WTC11 (cell line): ENCODE measurements at regions of chr4 and their contacts with region 1.

Region 1: DNA sequence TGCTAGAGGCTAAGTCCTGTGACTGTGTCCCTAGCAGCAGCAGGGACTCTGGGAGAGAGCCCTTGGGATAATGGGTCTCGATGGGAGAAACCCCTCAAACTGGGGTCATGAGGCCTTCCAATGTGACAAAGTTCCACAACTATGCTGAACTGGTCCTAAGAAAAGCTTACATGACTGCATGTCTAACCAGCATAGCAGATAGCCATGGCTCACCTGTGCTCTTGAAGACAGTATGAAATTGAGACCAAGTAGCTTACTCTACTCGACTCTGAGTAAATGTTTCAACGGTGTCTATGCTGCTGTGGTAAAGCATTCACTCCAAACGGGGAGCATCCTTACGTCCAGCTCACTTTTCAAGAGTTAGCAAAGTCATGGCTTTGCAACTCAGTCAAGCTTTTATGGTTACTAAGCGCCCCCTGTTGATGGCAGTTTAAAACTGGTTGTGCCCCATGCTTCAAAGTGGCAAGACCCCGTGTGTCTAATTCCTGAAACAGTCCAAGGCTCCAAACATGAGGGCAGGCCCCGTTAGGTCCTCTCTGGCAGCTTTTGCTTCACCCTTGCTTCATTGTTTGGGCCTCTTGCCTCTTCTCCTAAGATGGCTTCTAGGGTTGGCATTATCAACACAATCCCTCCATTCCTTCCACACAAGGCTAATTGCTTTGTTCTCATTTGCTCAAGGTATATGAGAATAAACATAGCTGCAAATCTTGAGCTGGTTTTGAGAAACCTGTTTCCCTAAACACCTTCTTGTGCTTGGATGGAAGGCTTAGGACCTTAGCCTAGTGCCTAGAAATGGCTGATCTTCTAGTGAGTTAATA is 46.6 kb downstream of the CCNG2 start:
- DNase-seq: peak; percentile 72
- ATAC-seq: peak; percentile 97
- H3K4me3 Mint-ChIP-seq: no peak overlapping the region
- H3K27ac Mint-ChIP-seq: no peak overlapping the region
- H3K4me1 Mint-ChIP-seq: no peaks in the 10 kb centered on the region
- H3K27me3 Mint-ChIP-seq: peaks cover 15% of the 10 kb centered on the region
- CTCF ChIP-seq: peak; percentile 60

Region 2: DNA sequence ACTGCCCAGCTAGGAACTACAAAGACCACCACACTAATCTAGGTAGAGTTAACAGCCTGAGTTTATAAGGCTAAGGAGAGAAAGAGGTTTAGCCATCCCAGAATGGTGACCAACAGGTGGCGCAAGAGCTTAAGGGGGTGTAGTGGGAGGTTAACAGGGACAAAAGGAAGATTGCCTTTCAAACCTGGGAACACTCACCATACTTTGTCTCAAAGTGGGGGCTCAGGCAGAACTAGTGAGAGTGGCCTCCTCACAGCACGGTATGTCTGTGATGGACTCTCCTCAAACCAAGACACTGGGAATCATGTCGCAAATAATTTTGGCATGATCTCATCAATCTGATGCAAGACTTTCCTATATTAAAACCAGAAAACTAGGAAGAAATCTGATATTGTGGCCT is 151.2 kb before region 1 on chr4:
- CTCF ChIA-PET with region 1: interaction called, 92 read pairs
- POLR2A ChIA-PET with region 1: interaction called, 5 read pairs
- DNase-seq: peak; percentile 89
- ATAC-seq: peak; percentile 89
- H3K4me3 Mint-ChIP-seq: no peak overlapping the region
- H3K27ac Mint-ChIP-seq: peak overlapping the region; percentile 82
- H3K4me1 Mint-ChIP-seq: peaks cover 7% of the 10 kb centered on the region
- H3K27me3 Mint-ChIP-seq: no peaks in the 10 kb centered on the region
- CTCF ChIP-seq: peak; percentile 59

Region 3: DNA sequence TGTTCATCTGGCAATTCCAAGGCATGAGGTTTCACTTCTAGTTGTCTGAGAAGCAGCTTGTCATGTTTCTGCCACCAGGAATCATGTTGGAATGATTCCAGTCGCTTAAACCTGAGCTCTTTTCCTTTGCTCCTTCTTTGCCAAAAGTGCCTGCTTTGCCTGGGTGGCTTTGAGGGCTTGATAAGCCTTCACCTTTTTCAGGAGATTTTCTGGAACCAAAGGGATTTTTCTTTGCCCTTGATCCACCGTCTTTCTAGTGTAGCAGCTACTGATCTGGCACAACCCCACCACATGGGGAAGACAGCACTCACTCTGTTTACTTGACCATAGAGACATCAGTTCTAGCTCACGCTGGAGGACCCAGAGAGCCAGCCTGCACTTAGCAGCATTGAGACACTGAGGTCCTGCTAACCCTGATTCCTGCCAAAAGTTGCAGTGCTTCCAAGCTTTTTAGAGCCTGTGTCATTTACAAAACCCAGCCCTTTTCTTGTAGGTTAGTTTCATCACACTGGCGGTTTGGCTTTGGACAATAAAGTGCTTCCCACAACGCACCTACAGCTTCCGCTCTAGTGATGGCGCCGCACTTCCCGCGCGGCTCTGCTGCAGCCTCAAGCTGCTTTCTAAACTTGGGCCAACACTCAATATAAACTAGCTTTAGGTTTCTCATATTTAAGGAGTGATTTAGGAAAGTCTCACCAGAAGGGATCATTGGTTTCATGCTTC is 120.5 kb before region 1 on chr4:
- CTCF ChIA-PET with region 1: interaction called, 14 read pairs
- POLR2A ChIA-PET with region 1: no interaction called
- DNase-seq: no peak
- ATAC-seq: peak; percentile 62
- H3K4me3 Mint-ChIP-seq: no peak overlapping the region
- H3K27ac Mint-ChIP-seq: no peak overlapping the region
- H3K4me1 Mint-ChIP-seq: peaks cover 10% of the 10 kb centered on the region
- H3K27me3 Mint-ChIP-seq: 0 out of 2 replicates have a peak, but pooled peaks cover 2% of the 10 kb centered on the region
- CTCF ChIP-seq: no peak

Region 4: DNA sequence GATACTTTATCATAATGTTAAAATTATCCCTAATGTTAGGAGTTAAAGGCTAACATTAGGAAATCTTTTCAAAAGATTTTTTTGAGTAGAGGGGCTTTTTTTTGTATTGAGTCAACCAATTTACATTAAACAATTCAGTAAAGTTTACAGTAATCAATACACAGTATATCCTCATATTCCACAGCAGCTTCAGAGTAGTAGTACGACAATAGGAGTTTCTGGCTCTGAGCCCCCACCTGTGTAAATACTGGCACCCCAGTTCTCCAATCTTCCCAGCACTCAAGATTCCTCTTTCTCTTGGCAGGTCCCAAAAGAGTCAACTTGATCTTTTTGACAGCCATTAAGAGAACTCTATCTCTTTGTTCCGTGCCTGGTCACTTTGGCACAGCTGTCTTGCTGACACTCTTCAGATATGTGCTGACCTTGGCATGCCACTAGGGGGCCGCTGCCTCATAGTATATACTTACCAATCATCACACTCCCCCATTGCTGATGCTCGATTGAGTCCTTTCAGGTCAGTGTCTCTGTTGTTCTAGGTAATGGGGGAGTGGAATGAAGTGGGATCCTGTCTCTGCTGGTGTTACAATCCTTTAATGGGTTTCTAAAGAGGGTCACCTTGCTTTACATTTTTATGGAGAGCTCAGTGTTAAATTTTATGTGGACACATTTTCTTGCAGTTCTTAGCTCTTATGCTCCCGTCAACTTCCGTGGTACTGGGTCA is 108.3 kb before region 1 on chr4:
- CTCF ChIA-PET with region 1: interaction called, 56 read pairs
- POLR2A ChIA-PET with region 1: no interaction called
- DNase-seq: peak; percentile 77
- ATAC-seq: peak; percentile 99
- H3K4me3 Mint-ChIP-seq: no peak overlapping the region
- H3K27ac Mint-ChIP-seq: no peak overlapping the region
- H3K4me1 Mint-ChIP-seq: peaks cover 8% of the 10 kb centered on the region
- H3K27me3 Mint-ChIP-seq: no peaks in the 10 kb centered on the region
- CTCF ChIP-seq: peak; percentile 82

Region 5: DNA sequence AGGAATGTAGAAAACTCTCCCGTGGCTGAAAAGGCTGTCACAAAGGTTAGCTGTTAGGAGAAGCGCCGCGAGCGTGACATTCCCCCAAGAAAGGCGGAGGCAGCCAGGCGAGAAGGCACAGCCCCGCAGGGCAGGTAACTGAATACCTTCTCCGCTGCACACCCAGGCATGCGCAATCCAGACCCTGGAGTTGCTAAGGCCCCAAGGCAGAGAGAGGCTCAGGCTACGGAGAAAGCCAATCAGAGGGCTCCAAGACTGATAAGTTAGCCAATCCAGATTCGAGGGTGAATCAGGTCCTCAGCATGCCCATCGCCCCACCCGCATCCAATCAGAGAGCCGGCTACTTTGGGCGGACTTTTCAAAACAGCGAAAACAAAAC is 47.1 kb before region 1 on chr4:
- CTCF ChIA-PET with region 1: interaction called, 20 read pairs
- POLR2A ChIA-PET with region 1: interaction called, 3 read pairs
- DNase-seq: peak; percentile 98
- ATAC-seq: peak; percentile 88
- H3K4me3 Mint-ChIP-seq: peak overlapping the region; percentile 97
- H3K27ac Mint-ChIP-seq: peak overlapping the region; percentile 100
- H3K4me1 Mint-ChIP-seq: peaks cover 57% of the 10 kb centered on the region
- H3K27me3 Mint-ChIP-seq: no peaks in the 10 kb centered on the region; the same call in 1 of the 2 replicates
- CTCF ChIP-seq: no peak